GM12878 (cell line): ENCODE measurements at regions of chr2 and their contacts with region 1.

Region 1: GRCh38 chr2:101419096-101419663 is 31.9 kb upstream of the CREG2 start:
- DNase-seq: no peak
- ATAC-seq: peak; percentile 94
- H3K4me3 ChIP-seq: no peak overlapping the region
- H3K27ac ChIP-seq: no peak overlapping the region
- H3K4me1 ChIP-seq: no peaks in the 10 kb centered on the region
- H3K27me3 ChIP-seq: no peaks in the 10 kb centered on the region; a peak in 2 of 4 replicates
- CTCF ChIP-seq: peak; percentile 65 to 70 (median 65)
- EP300 ChIP-seq: no peak
- POLR2A ChIP-seq: no peak
- RAD21 ChIP-seq: peak; percentile 81

Region 2: GRCh38 chr2:101408925-101409324 is 10.3 kb before region 1 on chr2:
- CTCF ChIA-PET with region 1: interaction called, 15 read pairs
- POLR2A ChIA-PET with region 1: interaction called, 4 read pairs
- RAD21 ChIA-PET with region 1: no interaction called
- SMC1A ChIA-PET with region 1: interaction called, 4 read pairs
- in situ Hi-C with region 1: no loop called
- intact Hi-C with region 1: no loop called
- DNase-seq: no peak
- ATAC-seq: no peak
- H3K4me3 ChIP-seq: no peak overlapping the region
- H3K27ac ChIP-seq: no peak overlapping the region
- H3K4me1 ChIP-seq: no peaks in the 10 kb centered on the region
- H3K27me3 ChIP-seq: no peaks in the 10 kb centered on the region; a peak in 2 of 4 replicates
- CTCF ChIP-seq: no peak
- EP300 ChIP-seq: no peak
- POLR2A ChIP-seq: no peak
- RAD21 ChIP-seq: no peak

Region 3: GRCh38 chr2:101725515-101726192 is 306.5 kb after region 1 on chr2:
- CTCF ChIA-PET with region 1: interaction called, 40 read pairs
- POLR2A ChIA-PET with region 1: no interaction called
- RAD21 ChIA-PET with region 1: interaction called, 25 read pairs
- SMC1A ChIA-PET with region 1: interaction called, 24 read pairs
- in situ Hi-C with region 1: no loop called
- intact Hi-C with region 1: loop called (anchors 1 kb)
- DNase-seq: no peak
- ATAC-seq: 0 out of 3 replicates have a peak, but pooled peaks have one; percentile 15
- H3K4me3 ChIP-seq: no peak overlapping the region
- H3K27ac ChIP-seq: no peak overlapping the region
- H3K4me1 ChIP-seq: no peaks in the 10 kb centered on the region
- H3K27me3 ChIP-seq: no peaks in the 10 kb centered on the region; a peak in 1 of 4 replicates
- CTCF ChIP-seq: peak; percentile 21 to 46 (median 28); a peak in 5 of 6 replicates
- EP300 ChIP-seq: no peak
- POLR2A ChIP-seq: no peak
- RAD21 ChIP-seq: peak; percentile 58

Region 4: GRCh38 chr2:101746388-101746723 is 327.2 kb after region 1 on chr2:
- CTCF ChIA-PET with region 1: no interaction called
- POLR2A ChIA-PET with region 1: no interaction called
- RAD21 ChIA-PET with region 1: no interaction called
- SMC1A ChIA-PET with region 1: interaction called, 11 read pairs
- in situ Hi-C with region 1: no loop called
- intact Hi-C with region 1: no loop called
- DNase-seq: no peak
- ATAC-seq: no peak
- H3K4me3 ChIP-seq: no peak overlapping the region
- H3K27ac ChIP-seq: no peak overlapping the region
- H3K4me1 ChIP-seq: peaks cover 6% of the 10 kb centered on the region
- H3K27me3 ChIP-seq: no peaks in the 10 kb centered on the region; a peak in 1 of 4 replicates
- CTCF ChIP-seq: no peak
- EP300 ChIP-seq: no peak
- POLR2A ChIP-seq: no peak
- RAD21 ChIP-seq: no peak

Region 5: DNA sequence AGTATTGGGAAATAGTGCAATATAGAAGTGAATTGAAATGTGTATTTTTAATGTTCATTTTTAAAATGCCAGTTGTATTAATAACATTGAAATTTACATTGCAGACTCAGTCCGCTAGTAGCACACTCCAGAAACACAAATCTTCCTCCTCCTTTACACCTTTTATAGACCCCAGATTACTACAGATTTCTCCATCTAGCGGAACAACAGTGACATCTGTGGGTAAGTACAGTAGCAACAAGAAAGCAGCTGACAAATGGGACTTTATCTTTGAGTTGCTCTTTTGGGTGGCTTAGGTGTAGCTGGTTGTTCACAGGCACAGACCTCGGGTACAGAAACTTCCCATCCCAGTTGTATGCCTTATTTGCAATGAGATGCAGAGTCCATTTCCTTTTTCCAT is 454.4 kb after region 1 on chr2:
- CTCF ChIA-PET with region 1: interaction called, 20 read pairs
- POLR2A ChIA-PET with region 1: no interaction called
- RAD21 ChIA-PET with region 1: interaction called, 10 read pairs
- SMC1A ChIA-PET with region 1: interaction called, 6 read pairs
- in situ Hi-C with region 1: no loop called
- intact Hi-C with region 1: loop called (anchors 10 kb)
- DNase-seq: no peak
- ATAC-seq: peak; percentile 55; the same call in 2 of the 3 replicates
- H3K4me3 ChIP-seq: no peak overlapping the region
- H3K27ac ChIP-seq: no peak overlapping the region
- H3K4me1 ChIP-seq: no peaks in the 10 kb centered on the region
- H3K27me3 ChIP-seq: no peaks in the 10 kb centered on the region
- CTCF ChIP-seq: peak; percentile 11 to 48 (median 29); a peak in 3 of 6 replicates
- EP300 ChIP-seq: no peak
- POLR2A ChIP-seq: no peak
- RAD21 ChIP-seq: peak; percentile 66